ENCODE measurements at regions of chr20 and their contacts with region 1.

Region 1: GRCh38 chr20:53869466-53870258 is 200.7 kb downstream of the BCAS1 start:
- DNase-seq: peak; percentile 66
- H3K4me3 Mint-ChIP-seq: peak overlapping the region; percentile 54
- H3K27ac Mint-ChIP-seq: peak overlapping the region; percentile 92
- H3K4me1 Mint-ChIP-seq: peaks cover 67% of the 10 kb centered on the region
- H3K27me3 Mint-ChIP-seq: no peaks in the 10 kb centered on the region

Region 2: DNA sequence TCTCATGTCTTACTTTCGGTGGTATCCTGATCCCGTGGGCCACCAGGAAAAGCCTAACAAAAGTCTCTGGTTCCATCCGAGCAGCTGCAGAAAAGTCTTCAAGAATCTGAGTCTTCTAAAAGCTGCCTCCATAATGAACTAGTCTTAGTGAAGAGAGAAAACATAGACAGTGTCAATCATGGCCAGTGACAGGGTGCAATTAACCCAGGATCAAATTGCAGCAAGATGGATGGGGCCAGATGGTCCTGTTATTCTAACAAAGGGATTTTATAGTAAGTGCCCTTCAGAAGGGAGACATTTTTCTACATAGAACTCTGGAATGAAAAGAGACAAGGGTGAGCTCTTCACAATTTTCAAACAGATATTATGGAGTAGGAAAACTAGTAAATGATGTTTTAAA is 1396.5 kb before region 1 on chr20:
- intact Hi-C with region 1: no loop called
- DNase-seq: no peak
- H3K4me3 Mint-ChIP-seq: no peak overlapping the region
- H3K27ac Mint-ChIP-seq: no peak overlapping the region
- H3K4me1 Mint-ChIP-seq: no peaks in the 10 kb centered on the region
- H3K27me3 Mint-ChIP-seq: no peaks in the 10 kb centered on the region

Region 3: DNA sequence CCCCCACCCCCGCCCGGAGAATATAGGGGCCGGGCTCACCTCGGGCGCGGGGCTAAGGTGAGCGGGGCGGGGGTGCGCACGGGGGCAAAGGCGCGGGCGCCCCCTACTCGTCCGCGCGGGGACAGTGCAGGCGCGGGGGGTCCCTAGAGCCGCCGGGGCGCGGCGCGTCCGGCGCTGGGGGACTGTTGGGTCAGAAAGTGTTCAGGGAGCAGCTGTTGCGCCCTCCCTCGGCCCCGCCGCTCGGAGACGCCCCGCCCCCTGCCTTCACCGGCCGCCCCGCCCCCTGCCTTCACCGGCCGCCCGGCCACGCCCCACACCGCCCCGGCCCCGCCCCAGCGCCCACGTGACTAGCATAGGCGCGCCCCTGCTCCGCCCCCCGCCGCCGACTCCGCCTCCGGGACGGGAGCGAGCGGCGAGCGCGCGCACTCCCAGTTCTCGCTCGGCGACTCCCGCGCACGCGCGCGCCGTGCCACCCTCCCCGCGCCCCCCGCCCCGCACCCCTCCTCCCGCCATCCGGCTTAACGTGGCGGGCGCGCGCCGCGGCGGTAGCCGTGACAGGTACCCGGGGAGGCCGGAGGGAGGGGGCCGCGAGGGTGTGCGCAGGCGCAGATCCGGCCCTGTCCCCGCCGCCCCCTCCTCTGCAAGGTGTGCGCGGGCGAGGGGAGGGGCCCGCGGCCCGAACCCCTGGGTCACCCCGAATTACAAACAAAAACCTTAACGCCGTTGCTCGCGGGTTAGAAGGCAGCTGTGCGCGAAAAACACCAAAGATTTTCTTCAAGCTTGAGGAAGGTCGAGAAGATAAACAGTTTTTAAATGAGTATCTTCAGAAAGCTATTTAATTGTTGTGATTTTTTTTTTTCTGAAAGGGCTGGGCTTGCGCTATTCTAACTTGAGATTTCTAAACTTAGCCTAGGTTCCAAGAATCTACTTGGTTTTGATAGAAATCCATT is 275.3 kb before region 1 on chr20:
- intact Hi-C with region 1: loop called (anchors 5 kb)
- DNase-seq: peak; percentile 92
- H3K4me3 Mint-ChIP-seq: peak overlapping the region; percentile 85
- H3K27ac Mint-ChIP-seq: peak overlapping the region; percentile 92
- H3K4me1 Mint-ChIP-seq: peaks cover 49% of the 10 kb centered on the region
- H3K27me3 Mint-ChIP-seq: no peaks in the 10 kb centered on the region

Region 4: GRCh38 chr20:53652090-53652858 is 217.4 kb before region 1 on chr20:
- intact Hi-C with region 1: loop called (anchors 2 kb)
- DNase-seq: no peak
- H3K4me3 Mint-ChIP-seq: peak overlapping the region; percentile 75
- H3K27ac Mint-ChIP-seq: peak overlapping the region; percentile 99
- H3K4me1 Mint-ChIP-seq: peaks cover 39% of the 10 kb centered on the region
- H3K27me3 Mint-ChIP-seq: no peaks in the 10 kb centered on the region

Region 5: GRCh38 chr20:53750827-53751619 is 118.6 kb before region 1 on chr20:
- intact Hi-C with region 1: loop called (anchors 1 kb)
- DNase-seq: peak; percentile 59
- H3K4me3 Mint-ChIP-seq: peak overlapping the region; percentile 59
- H3K27ac Mint-ChIP-seq: peak overlapping the region; percentile 99
- H3K4me1 Mint-ChIP-seq: peaks cover 63% of the 10 kb centered on the region
- H3K27me3 Mint-ChIP-seq: no peaks in the 10 kb centered on the region

Region 6: GRCh38 chr20:53839423-53840176 is 30.1 kb before region 1 on chr20:
- intact Hi-C with region 1: loop called (anchors 1 kb)
- DNase-seq: peak; percentile 64
- H3K4me3 Mint-ChIP-seq: peak overlapping the region; percentile 73
- H3K27ac Mint-ChIP-seq: peak overlapping the region; percentile 84
- H3K4me1 Mint-ChIP-seq: peaks cover 62% of the 10 kb centered on the region
- H3K27me3 Mint-ChIP-seq: no peaks in the 10 kb centered on the region

Region 7: GRCh38 chr20:53855733-53856132 is 13.9 kb before region 1 on chr20:
- intact Hi-C with region 1: no loop called
- DNase-seq: no peak
- H3K4me3 Mint-ChIP-seq: no peak overlapping the region
- H3K27ac Mint-ChIP-seq: no peak overlapping the region
- H3K4me1 Mint-ChIP-seq: peaks cover 29% of the 10 kb centered on the region
- H3K27me3 Mint-ChIP-seq: no peaks in the 10 kb centered on the region

Region 8: DNA sequence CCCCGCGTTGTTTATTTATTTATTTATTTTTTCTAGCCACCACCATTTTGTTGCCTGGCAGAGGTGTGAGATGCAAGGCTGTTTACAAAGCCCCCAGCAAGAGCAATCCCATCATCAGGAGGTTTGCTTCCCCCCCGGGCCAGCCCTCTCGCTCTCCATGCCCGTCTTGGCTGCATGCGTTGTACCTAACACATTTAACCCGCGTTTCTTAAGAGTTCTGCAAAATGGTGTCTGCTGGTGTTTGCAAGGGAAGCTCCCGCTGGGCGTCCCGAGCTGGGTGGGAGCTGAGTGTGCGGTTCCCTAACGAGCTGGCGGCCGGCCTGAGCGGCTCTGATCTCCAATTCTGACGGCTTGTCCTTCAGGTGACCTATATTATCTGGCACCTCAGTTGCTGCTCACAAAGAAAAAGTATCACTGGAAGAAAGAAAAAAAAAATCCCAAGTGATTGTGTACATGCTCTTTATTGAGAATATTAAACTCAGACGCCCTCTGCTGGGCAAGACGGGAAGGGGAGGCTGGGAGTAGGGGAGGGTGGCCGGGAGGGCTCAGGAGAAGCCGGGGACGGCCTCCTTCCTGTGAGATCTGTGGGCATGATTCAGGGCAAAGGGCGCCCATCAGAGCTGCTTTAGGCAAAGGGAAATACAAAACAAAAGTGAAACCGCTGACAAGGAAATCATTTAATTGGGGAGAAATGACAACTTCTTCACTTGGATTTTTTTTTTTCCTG is 45.9 kb after region 1 on chr20:
- intact Hi-C with region 1: loop called (anchors 1 kb)
- DNase-seq: peak; percentile 89
- H3K4me3 Mint-ChIP-seq: peak overlapping the region; percentile 89
- H3K27ac Mint-ChIP-seq: peak overlapping the region; percentile 92
- H3K4me1 Mint-ChIP-seq: peaks cover 51% of the 10 kb centered on the region
- H3K27me3 Mint-ChIP-seq: no peaks in the 10 kb centered on the region

Region 9: DNA sequence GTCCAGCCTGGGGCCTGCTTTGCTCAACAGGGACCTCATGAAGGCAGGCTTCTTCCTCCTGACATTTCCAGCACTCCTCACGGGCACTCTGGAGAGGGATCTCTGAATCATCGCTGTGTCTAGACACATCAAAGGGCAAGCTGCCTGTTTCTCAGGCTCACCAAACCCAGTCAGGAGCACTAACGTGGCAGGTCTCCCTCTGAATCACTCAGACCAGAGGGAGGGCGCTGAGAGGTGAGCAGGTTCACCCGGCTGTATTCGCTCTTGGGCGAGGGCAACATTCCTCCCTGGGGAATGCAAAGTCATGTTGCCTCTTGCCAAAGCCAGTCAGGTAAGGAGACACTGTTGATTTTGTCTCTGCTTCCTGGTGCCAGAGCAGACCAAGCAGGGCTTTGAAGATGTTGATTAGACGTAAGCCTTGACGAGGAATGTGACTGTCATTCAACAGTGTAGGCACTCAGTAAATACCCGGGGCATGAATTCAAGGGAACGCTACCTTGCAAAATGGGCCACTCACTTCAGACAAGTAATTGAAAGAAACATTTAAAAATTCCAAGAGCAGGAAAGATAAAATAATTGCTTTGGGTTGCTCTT is 254.0 kb after region 1 on chr20:
- intact Hi-C with region 1: no loop called
- DNase-seq: no peak
- H3K4me3 Mint-ChIP-seq: no peak overlapping the region
- H3K27ac Mint-ChIP-seq: no peak overlapping the region
- H3K4me1 Mint-ChIP-seq: no peaks in the 10 kb centered on the region
- H3K27me3 Mint-ChIP-seq: no peaks in the 10 kb centered on the region

Region 10: GRCh38 chr20:54133434-54134427 is 264.1 kb after region 1 on chr20:
- intact Hi-C with region 1: no loop called
- DNase-seq: no peak
- H3K4me3 Mint-ChIP-seq: no peak overlapping the region
- H3K27ac Mint-ChIP-seq: no peak overlapping the region
- H3K4me1 Mint-ChIP-seq: no peaks in the 10 kb centered on the region
- H3K27me3 Mint-ChIP-seq: no peaks in the 10 kb centered on the region